ENCODE measurements at regions of chr5 and their contacts with region 1.

Region 1: GRCh38 chr5:88452820-88453219 is 184.2 kb upstream of the TMEM161B start:
- DNase-seq: no peak
- H3K4me3 ChIP-seq: no peak overlapping the region
- H3K27ac ChIP-seq: no peak overlapping the region
- H3K4me1 ChIP-seq: no peaks in the 10 kb centered on the region
- H3K27me3 ChIP-seq: no peaks in the 10 kb centered on the region
- CTCF ChIP-seq: no peak

Region 2: DNA sequence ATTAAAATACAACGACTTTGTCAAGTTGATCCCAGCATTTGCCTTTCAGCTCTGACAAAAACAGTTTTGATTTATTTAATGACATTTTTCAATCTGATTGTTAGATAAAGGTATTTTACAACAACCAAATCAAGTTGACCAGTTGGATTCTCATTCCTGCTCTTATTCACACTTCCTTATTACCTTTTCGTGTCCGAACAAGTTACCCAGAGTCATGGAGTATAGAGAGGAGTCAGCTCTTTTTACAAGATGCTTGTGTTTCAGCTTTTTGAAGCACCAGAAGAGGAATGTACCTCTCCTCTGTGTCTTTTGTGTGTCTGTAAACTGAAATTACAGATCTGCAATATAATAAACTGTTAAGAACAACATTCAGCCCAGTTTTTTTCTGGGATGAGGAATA is 32.9 kb before region 1 on chr5:
- CTCF ChIA-PET with region 1: no interaction called
- POLR2A ChIA-PET with region 1: interaction called, 17 read pairs
- intact Hi-C with region 1: no loop called
- DNase-seq: no peak
- H3K4me3 ChIP-seq: no peak overlapping the region
- H3K27ac ChIP-seq: no peak overlapping the region
- H3K4me1 ChIP-seq: no peaks in the 10 kb centered on the region
- H3K27me3 ChIP-seq: no peaks in the 10 kb centered on the region
- CTCF ChIP-seq: no peak

Region 3: GRCh38 chr5:88470745-88471144 is 17.9 kb after region 1 on chr5:
- CTCF ChIA-PET with region 1: no interaction called
- POLR2A ChIA-PET with region 1: no interaction called
- intact Hi-C with region 1: no loop called
- DNase-seq: no peak
- H3K4me3 ChIP-seq: no peak overlapping the region
- H3K27ac ChIP-seq: no peak overlapping the region
- H3K4me1 ChIP-seq: peaks cover 9% of the 10 kb centered on the region; the same call in 1 of the 2 replicates
- H3K27me3 ChIP-seq: no peaks in the 10 kb centered on the region
- CTCF ChIP-seq: no peak

Region 4: DNA sequence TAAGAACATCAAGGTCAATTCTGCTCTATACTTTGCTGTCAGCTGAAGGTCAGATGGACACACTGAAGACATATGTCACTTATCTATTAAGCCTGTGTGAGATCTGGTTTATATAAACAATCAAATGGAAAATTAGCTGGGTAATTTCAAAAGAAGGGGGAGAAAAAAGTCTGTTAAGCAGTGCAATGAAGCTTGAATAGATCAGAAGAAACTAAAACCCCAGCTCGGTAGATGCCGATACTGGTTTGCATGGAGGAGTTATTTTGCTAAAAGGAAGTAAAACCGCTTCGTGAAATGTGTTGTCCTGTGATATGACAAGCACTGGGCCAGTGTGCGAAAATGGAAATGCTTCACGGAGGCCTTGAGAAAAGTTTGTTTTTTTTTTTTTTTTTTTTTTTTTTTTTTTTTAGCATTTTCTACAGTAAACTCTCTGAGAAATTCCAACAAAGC is 281.4 kb after region 1 on chr5:
- CTCF ChIA-PET with region 1: no interaction called
- POLR2A ChIA-PET with region 1: no interaction called
- intact Hi-C with region 1: no loop called
- DNase-seq: no peak
- H3K4me3 ChIP-seq: no peak overlapping the region
- H3K27ac ChIP-seq: no peak overlapping the region
- H3K4me1 ChIP-seq: no peaks in the 10 kb centered on the region
- H3K27me3 ChIP-seq: no peaks in the 10 kb centered on the region
- CTCF ChIP-seq: no peak

Region 5: DNA sequence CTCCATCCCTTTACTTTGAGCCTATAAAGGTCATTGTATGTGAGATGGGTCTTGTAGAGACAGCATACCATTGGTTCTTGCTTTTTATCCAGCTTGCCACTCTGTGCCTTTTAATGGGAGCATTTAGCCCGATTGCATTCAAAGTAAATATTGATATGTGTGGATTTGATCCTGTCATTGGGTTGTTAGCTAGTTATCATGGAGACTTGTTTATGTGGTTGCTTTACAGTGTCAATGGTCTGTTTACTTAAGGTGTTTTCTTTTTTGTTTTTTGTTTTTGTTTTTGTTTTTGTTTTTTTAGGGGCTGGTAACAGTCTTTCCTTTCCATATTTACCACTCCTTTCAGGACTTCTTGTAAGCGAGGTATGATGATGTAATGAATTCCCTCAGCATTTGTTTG is 1871.3 kb after region 1 on chr5:
- CTCF ChIA-PET with region 1: no interaction called
- POLR2A ChIA-PET with region 1: no interaction called
- intact Hi-C with region 1: no loop called
- DNase-seq: no peak
- H3K4me3 ChIP-seq: no peak overlapping the region
- H3K27ac ChIP-seq: no peak overlapping the region
- H3K4me1 ChIP-seq: no peaks in the 10 kb centered on the region
- H3K27me3 ChIP-seq: no peaks in the 10 kb centered on the region
- CTCF ChIP-seq: no peak

Measured in PC-9 (cell line).